ENCODE measurements at regions of chr18 and their contacts with region 1.

Region 1: GRCh38 chr18:57353940-57354461 is 1.6 kb downstream of the ST8SIA3 start:
- DNase-seq: peak; percentile 49
- ATAC-seq: peak; percentile 83 to 94

Region 2: DNA sequence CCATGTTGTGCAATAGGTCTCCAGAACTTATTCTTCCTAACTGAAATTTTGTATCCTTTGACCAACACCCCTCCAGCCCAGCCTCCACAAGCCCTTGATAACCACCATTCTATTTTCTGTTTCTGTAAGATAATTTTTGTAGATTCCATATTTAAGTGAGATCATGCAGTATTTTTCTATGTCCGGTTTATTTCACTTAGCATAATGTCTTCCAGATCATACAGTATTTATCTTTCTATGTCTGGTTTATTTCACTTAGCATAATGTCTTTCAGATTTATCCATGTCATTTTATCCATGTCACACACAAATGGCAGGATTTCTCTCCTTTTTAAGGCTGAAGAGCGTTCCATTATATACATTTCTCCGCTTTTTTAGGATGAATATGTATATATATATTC is 56.7 kb after region 1 on chr18:
- intact Hi-C with region 1: loop called in 1 of 2 experiments (anchors 10 kb)
- DNase-seq: no peak
- ATAC-seq: no peak